HepG2 (cell line): ENCODE measurements at regions of chr20 and their contacts with region 1.

Region 1: GRCh38 chr20:19661717-19662636 is 96.1 kb upstream of the RIN2 start:
- DNase-seq: peak; percentile 62
- ATAC-seq: peak; percentile 80
- H3K4me3 ChIP-seq: no peak overlapping the region
- H3K27ac ChIP-seq: no peak overlapping the region
- H3K4me1 ChIP-seq: peaks cover 32% of the 10 kb centered on the region
- H3K27me3 ChIP-seq: peaks cover 0 to 20% of the 10 kb centered on the region in 2 experiments; a peak in 2 of 5 replicates
- CTCF ChIP-seq: peak; percentile 99
- EP300 ChIP-seq: no peak
- POLR2A ChIP-seq: no peak
- RAD21 ChIP-seq: peak; percentile 91

Region 2: GRCh38 chr20:18632196-18633009 is 1029.6 kb before region 1 on chr20:
- CTCF ChIA-PET with region 1: interaction called, 3 read pairs
- POLR2A ChIA-PET with region 1: no interaction called
- in situ Hi-C with region 1: loop called (anchors 10 kb)
- intact Hi-C with region 1: loop called (anchors 1 kb)
- DNase-seq: peak; percentile 72
- ATAC-seq: peak; percentile 98
- H3K4me3 ChIP-seq: no peak overlapping the region
- H3K27ac ChIP-seq: no peak overlapping the region
- H3K4me1 ChIP-seq: no peaks in the 10 kb centered on the region
- H3K27me3 ChIP-seq: no peaks in the 10 kb centered on the region
- CTCF ChIP-seq: peak; percentile 97
- EP300 ChIP-seq: no peak
- POLR2A ChIP-seq: no peak
- RAD21 ChIP-seq: peak; percentile 92

Region 3: GRCh38 chr20:19205977-19206396 is 456.0 kb before region 1 on chr20:
- CTCF ChIA-PET with region 1: interaction called, 88 read pairs
- POLR2A ChIA-PET with region 1: no interaction called
- in situ Hi-C with region 1: loop called (anchors 5 kb)
- intact Hi-C with region 1: loop called (anchors 1 kb)
- DNase-seq: peak; percentile 50
- ATAC-seq: peak; percentile 96
- H3K4me3 ChIP-seq: no peak overlapping the region
- H3K27ac ChIP-seq: no peak overlapping the region
- H3K4me1 ChIP-seq: no peaks in the 10 kb centered on the region
- H3K27me3 ChIP-seq: peaks cover under 1 to 20% of the 10 kb centered on the region in 2 experiments; a peak in 4 of 5 replicates
- CTCF ChIP-seq: peak; percentile 95
- EP300 ChIP-seq: no peak
- POLR2A ChIP-seq: no peak
- RAD21 ChIP-seq: peak; percentile 47

Region 4: DNA sequence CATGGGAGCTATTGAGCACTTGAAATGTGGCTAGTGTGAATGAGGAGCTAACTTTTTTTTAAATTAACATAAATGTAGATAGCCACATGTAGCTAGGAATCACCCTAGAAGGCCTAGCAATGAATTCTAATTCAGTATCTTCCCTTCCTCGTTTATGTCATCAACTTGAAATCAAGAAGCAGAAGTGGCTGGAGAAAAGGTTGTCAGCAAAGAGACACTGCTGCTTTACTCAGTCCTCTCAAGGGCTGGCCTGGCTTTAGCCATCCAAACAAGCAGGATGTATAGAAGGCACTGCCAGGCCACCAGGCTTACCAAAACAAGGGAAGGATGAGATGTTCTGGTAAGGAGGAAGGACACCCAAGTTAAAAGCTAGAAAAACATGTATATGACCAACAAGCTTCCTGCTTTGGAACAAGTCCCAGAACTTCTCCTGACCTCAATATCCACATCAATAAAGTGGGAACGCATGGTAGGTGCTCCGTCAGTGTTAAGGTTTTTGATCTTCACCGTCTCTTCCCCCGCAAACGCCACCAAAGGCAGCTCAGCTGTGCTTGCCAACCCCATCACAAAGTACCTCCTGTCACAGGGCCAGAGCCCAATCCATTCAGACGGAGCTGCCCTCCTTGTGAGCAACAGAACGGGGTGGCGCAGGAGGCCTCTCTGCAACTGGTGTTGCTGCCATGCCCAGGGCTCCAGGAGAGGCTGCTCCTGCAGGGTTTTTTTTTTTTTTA is 139.7 kb before region 1 on chr20:
- CTCF ChIA-PET with region 1: no interaction called
- POLR2A ChIA-PET with region 1: no interaction called
- in situ Hi-C with region 1: no loop called
- intact Hi-C with region 1: loop called (anchors 10 kb)
- DNase-seq: no peak
- ATAC-seq: no peak
- H3K4me3 ChIP-seq: no peak overlapping the region
- H3K27ac ChIP-seq: no peak overlapping the region
- H3K4me1 ChIP-seq: no peaks in the 10 kb centered on the region
- H3K27me3 ChIP-seq: peaks cover 0 to 4% of the 10 kb centered on the region in 2 experiments; a peak in 1 of 5 replicates
- CTCF ChIP-seq: no peak
- EP300 ChIP-seq: no peak
- POLR2A ChIP-seq: no peak
- RAD21 ChIP-seq: no peak

Region 5: GRCh38 chr20:19588732-19589131 is 73.2 kb before region 1 on chr20:
- CTCF ChIA-PET with region 1: interaction called, 7 read pairs
- POLR2A ChIA-PET with region 1: no interaction called
- in situ Hi-C with region 1: loop called (anchors 5 kb)
- intact Hi-C with region 1: loop called (anchors 1 kb)
- DNase-seq: peak; percentile 16
- ATAC-seq: no peak
- H3K4me3 ChIP-seq: no peak overlapping the region
- H3K27ac ChIP-seq: no peak overlapping the region
- H3K4me1 ChIP-seq: peaks cover 8% of the 10 kb centered on the region
- H3K27me3 ChIP-seq: peaks cover 4 to 29% of the 10 kb centered on the region in 2 experiments; a peak in 3 of 5 replicates
- CTCF ChIP-seq: peak; percentile 34
- EP300 ChIP-seq: no peak
- POLR2A ChIP-seq: no peak
- RAD21 ChIP-seq: no peak

Region 6: GRCh38 chr20:19644085-19644484 is 17.9 kb before region 1 on chr20:
- CTCF ChIA-PET with region 1: no interaction called
- POLR2A ChIA-PET with region 1: no interaction called
- in situ Hi-C with region 1: no loop called
- intact Hi-C with region 1: no loop called
- DNase-seq: no peak
- ATAC-seq: no peak
- H3K4me3 ChIP-seq: no peak overlapping the region
- H3K27ac ChIP-seq: no peak overlapping the region
- H3K4me1 ChIP-seq: peaks cover 5% of the 10 kb centered on the region
- H3K27me3 ChIP-seq: peaks cover 0 to 5% of the 10 kb centered on the region in 2 experiments; a peak in 3 of 5 replicates
- CTCF ChIP-seq: no peak
- EP300 ChIP-seq: no peak
- POLR2A ChIP-seq: no peak
- RAD21 ChIP-seq: no peak

Region 7: DNA sequence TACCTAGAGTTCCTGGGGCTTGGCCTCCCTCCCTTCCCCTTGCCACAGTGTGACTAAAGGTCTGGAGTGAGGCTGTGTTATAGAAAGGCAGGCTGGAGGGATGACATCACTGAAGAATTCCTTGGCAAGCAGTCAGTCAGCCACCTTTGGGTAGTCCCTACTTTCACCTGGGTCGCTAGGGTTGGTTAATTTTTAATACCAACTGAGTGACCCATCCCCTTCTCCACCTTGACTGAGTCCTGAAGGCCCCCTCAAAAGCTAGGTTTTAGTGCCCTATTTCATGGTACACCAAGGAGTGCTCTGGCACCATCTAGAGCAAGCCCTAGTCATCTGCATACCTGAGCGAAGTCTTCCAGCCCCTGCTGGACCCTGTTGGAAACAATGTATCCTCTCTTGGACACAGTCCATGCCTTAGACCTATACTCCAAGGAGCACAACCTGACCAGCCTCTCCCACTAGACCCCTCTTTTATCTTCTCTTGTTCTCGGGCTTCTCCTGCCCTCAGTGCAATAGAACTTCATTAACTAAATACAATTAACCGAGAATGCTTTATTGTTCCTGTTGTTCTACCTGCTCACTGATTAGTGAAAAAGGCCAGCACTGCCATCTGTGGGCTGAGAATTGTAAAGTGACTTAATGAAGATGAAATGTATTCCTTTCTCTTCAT is 140.6 kb after region 1 on chr20:
- CTCF ChIA-PET with region 1: no interaction called
- POLR2A ChIA-PET with region 1: no interaction called
- in situ Hi-C with region 1: no loop called
- intact Hi-C with region 1: no loop called
- DNase-seq: peak; percentile 75
- ATAC-seq: peak; percentile 100
- H3K4me3 ChIP-seq: no peak overlapping the region
- H3K27ac ChIP-seq: no peak overlapping the region
- H3K4me1 ChIP-seq: no peaks in the 10 kb centered on the region
- H3K27me3 ChIP-seq: no peaks in the 10 kb centered on the region
- CTCF ChIP-seq: peak; percentile 72
- EP300 ChIP-seq: no peak
- POLR2A ChIP-seq: no peak
- RAD21 ChIP-seq: peak; percentile 51

Region 8: GRCh38 chr20:19885939-19886660 is 224.1 kb after region 1 on chr20:
- CTCF ChIA-PET with region 1: no interaction called
- POLR2A ChIA-PET with region 1: no interaction called
- in situ Hi-C with region 1: no loop called
- intact Hi-C with region 1: no loop called
- DNase-seq: peak; percentile 73
- ATAC-seq: peak; percentile 48
- H3K4me3 ChIP-seq: peak overlapping the region; percentile 37 to 72 (median 46)
- H3K27ac ChIP-seq: peak overlapping the region; percentile 32
- H3K4me1 ChIP-seq: peaks cover 77% of the 10 kb centered on the region
- H3K27me3 ChIP-seq: peaks cover 0 to 17% of the 10 kb centered on the region in 2 experiments; a peak in 2 of 5 replicates
- CTCF ChIP-seq: no peak
- EP300 ChIP-seq: no peak; a peak in 1 of 4 replicates
- POLR2A ChIP-seq: no peak; a peak in 1 of 4 replicates
- RAD21 ChIP-seq: no peak